ENCODE measurements at regions of chr6 and their contacts with region 1.

Region 1: GRCh38 chr6:26342106-26343004 is 22.6 kb upstream of the BTN3A2 start:
- DNase-seq: peak in 1 of 9 experiments; percentile 37
- ATAC-seq: peak; percentile 18
- H3K4me3 ChIP-seq: peak overlapping the region; percentile 33 to 49
- H3K4me3 Mint-ChIP-seq: peak overlapping the region; percentile 76
- H3K27ac ChIP-seq: peak overlapping the region in 1 of 2 experiments; percentile 52
- H3K27ac Mint-ChIP-seq: peak overlapping the region; percentile 71
- H3K4me1 ChIP-seq: peaks cover 4% of the 10 kb centered on the region
- H3K4me1 Mint-ChIP-seq: peaks cover 6% of the 10 kb centered on the region
- H3K27me3 ChIP-seq: no peaks in the 10 kb centered on the region
- H3K27me3 Mint-ChIP-seq: peaks cover 2% of the 10 kb centered on the region
- CTCF ChIP-seq: no peak

Region 2: DNA sequence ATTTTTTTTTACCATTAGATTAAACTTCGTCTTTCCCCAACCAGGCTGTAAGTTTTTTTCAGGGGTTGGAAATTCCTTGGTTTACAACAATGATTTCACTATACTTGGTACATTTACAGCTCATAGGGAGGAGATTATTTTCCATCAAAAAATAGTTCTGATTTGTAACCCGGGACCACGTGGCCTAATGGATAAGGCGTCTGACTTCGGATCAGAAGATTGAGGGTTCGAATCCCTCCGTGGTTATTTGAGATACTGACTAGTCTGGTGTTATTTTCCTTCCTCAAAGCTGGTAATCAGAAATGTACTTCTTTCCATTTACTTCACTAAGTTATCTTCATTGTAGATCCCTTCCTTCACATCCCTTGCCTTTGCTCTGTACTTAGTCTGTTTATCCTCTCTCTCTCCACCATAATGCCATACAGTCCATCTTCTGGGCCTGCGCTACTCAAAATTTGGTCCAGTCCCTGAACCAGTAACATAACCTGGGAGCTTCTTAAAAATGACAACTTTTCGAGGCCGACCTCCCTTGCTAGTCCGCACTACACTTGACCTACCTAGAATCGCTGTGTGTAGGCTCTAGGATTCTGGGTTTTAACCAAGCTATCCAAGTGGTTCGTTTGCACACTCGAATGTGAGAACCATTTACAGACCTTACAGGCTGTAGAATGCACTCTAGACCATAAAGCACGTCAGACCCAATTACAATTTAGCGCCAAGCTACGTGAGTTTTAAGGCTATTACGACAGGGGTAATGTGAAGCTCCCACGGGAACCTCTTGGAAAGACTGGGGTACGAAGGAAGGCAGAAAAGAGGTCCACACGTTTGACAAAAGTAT is 19.5 kb before region 1 on chr6:
- CTCF ChIA-PET with region 1: interaction called, 52 read pairs
- POLR2A ChIA-PET with region 1: no interaction called
- intact Hi-C with region 1: no loop called
- DNase-seq: peak in 8 of 9 experiments; percentile 32 to 86 (median 58)
- ATAC-seq: peak; percentile 65
- H3K4me3 ChIP-seq: peak overlapping the region; percentile 55 to 64
- H3K4me3 Mint-ChIP-seq: peak overlapping the region; percentile 88
- H3K27ac ChIP-seq: no peak overlapping the region
- H3K27ac Mint-ChIP-seq: peak overlapping the region; percentile 90
- H3K4me1 ChIP-seq: peaks cover 5% of the 10 kb centered on the region
- H3K4me1 Mint-ChIP-seq: peaks cover 24% of the 10 kb centered on the region
- H3K27me3 ChIP-seq: peaks cover 0 to 2% of the 10 kb centered on the region in 2 experiments
- H3K27me3 Mint-ChIP-seq: peaks cover 15% of the 10 kb centered on the region
- CTCF ChIP-seq: no peak

Region 3: DNA sequence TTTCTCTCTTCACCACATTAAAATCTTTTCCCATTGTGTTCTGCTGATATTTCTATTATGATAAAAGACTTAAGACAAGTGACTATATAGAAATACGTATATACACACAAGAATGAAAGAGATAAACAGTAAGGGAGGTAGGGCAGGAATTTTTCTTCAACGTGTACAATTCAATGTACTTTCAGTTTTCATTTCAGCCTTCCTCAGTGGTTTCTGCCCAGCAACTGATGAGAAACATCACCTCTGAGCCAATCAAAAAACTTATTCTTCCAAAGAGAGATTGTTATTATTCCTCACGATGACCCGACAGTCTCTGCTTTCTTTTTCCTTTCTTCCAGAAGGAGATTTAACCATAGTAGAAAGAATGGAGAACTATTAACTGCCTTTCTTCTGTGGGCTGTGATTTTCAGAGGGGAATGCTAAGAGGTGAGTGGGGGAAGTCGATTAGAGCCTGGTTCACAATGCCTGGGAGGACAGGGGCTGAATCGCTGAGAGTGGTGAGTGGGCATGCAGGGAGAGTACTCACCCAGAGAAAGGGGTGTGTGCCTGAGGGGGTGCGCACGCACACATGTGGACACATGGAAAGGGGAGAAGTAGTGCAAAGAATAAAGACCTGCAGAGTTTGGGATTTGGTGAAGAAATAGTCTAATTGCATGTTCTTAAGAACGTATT is 59.8 kb after region 1 on chr6 and contains the start of gene BTN3A1:
- CTCF ChIA-PET with region 1: interaction called, 7 read pairs
- POLR2A ChIA-PET with region 1: no interaction called
- intact Hi-C with region 1: loop called in 1 of 2 experiments (anchors 10 kb)
- DNase-seq: peak; percentile 22 to 90 (median 65)
- ATAC-seq: peak; percentile 88
- H3K4me3 ChIP-seq: peak within 1 kb of the TSS; percentile 82 to 91
- H3K4me3 Mint-ChIP-seq: peak within 1 kb of the TSS; percentile 92
- H3K27ac ChIP-seq: peak within 1 kb of the TSS; percentile 92 to 97
- H3K27ac Mint-ChIP-seq: peak within 1 kb of the TSS; percentile 99
- H3K4me1 ChIP-seq: peaks cover 42% of the 10 kb centered on the region
- H3K4me1 Mint-ChIP-seq: peaks cover 50% of the 10 kb centered on the region
- H3K27me3 ChIP-seq: no peaks in the 10 kb centered on the region
- H3K27me3 Mint-ChIP-seq: no peaks in the 10 kb centered on the region
- CTCF ChIP-seq: no peak
- total RNA-seq, gene BTN3A1: 97.0 to 104 TPM

Region 4: DNA sequence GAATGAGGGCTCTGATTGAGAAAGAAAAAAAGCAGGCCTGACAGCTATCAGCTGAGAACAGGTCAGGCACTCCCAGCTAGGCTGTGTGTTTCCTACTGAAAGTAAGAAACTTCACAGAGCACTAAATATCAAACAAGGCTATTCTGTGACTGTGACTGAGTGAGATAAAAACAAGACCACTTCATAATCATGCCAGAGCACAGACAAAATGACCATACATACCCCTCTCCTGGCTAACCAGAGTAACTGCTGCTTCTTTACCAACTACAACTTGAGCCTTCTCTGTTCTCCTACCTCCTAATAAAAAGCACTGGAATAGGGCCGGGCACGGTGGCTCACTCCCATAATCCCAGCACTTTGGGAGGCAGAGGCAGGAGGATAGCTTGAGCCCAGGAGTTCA is 150.9 kb after region 1 on chr6:
- CTCF ChIA-PET with region 1: interaction called, 10 read pairs
- POLR2A ChIA-PET with region 1: no interaction called
- intact Hi-C with region 1: loop called (anchors 1 kb)
- DNase-seq: peak in 2 of 9 experiments; percentile 26 to 50
- ATAC-seq: peak; percentile 67
- H3K4me3 ChIP-seq: no peak overlapping the region
- H3K4me3 Mint-ChIP-seq: no peak overlapping the region
- H3K27ac ChIP-seq: no peak overlapping the region
- H3K27ac Mint-ChIP-seq: no peak overlapping the region
- H3K4me1 ChIP-seq: no peaks in the 10 kb centered on the region
- H3K4me1 Mint-ChIP-seq: peaks cover 3% of the 10 kb centered on the region
- H3K27me3 ChIP-seq: no peaks in the 10 kb centered on the region
- H3K27me3 Mint-ChIP-seq: no peaks in the 10 kb centered on the region
- CTCF ChIP-seq: peak; percentile 31

Region 5: DNA sequence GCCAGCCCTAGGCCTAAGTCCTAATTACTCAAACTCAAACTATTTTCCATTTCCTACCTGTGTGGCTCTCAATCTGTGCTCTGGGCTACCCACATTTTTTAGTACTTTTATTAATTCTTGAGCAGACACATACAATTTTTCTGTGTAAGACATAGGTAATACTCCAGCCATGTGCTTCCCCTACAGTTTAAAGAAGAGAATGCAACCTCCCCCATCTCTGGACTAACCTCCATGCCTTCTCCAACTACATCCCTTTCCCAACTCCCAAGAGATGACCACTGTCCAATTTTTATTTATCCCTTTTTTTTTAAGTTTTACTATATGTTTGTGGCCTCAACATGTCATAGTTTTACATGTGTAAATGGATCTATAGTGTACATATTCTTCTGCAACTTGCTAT is 201.6 kb after region 1 on chr6:
- CTCF ChIA-PET with region 1: interaction called, 11 read pairs
- POLR2A ChIA-PET with region 1: no interaction called
- intact Hi-C with region 1: loop called in 1 of 2 experiments (anchors 2 kb)
- DNase-seq: peak in 2 of 9 experiments; percentile 36 to 43
- ATAC-seq: peak; percentile 84
- H3K4me3 ChIP-seq: no peak overlapping the region
- H3K4me3 Mint-ChIP-seq: no peak overlapping the region
- H3K27ac ChIP-seq: no peak overlapping the region
- H3K27ac Mint-ChIP-seq: peak overlapping the region; percentile 34
- H3K4me1 ChIP-seq: peaks cover 11% of the 10 kb centered on the region
- H3K4me1 Mint-ChIP-seq: peaks cover 42% of the 10 kb centered on the region
- H3K27me3 ChIP-seq: no peaks in the 10 kb centered on the region
- H3K27me3 Mint-ChIP-seq: no peaks in the 10 kb centered on the region
- CTCF ChIP-seq: peak; percentile 60

Region 6: GRCh38 chr6:26576929-26577719 is 234.8 kb after region 1 on chr6:
- CTCF ChIA-PET with region 1: interaction called, 37 read pairs
- POLR2A ChIA-PET with region 1: no interaction called
- intact Hi-C with region 1: loop called (anchors 1 kb)
- DNase-seq: peak in 5 of 9 experiments; percentile 53 to 80 (median 59)
- ATAC-seq: peak; percentile 35
- H3K4me3 ChIP-seq: peak overlapping the region; percentile 37 to 53
- H3K4me3 Mint-ChIP-seq: peak overlapping the region; percentile 84
- H3K27ac ChIP-seq: no peak overlapping the region
- H3K27ac Mint-ChIP-seq: peak overlapping the region; percentile 75
- H3K4me1 ChIP-seq: peaks cover 11% of the 10 kb centered on the region
- H3K4me1 Mint-ChIP-seq: peaks cover 25% of the 10 kb centered on the region
- H3K27me3 ChIP-seq: no peaks in the 10 kb centered on the region
- H3K27me3 Mint-ChIP-seq: no peaks in the 10 kb centered on the region
- CTCF ChIP-seq: no peak

Measured in CD8-positive, alpha-beta T cell (primary cell).